ENCODE measurements at regions of chr11 and their contacts with region 1.

Region 1: DNA sequence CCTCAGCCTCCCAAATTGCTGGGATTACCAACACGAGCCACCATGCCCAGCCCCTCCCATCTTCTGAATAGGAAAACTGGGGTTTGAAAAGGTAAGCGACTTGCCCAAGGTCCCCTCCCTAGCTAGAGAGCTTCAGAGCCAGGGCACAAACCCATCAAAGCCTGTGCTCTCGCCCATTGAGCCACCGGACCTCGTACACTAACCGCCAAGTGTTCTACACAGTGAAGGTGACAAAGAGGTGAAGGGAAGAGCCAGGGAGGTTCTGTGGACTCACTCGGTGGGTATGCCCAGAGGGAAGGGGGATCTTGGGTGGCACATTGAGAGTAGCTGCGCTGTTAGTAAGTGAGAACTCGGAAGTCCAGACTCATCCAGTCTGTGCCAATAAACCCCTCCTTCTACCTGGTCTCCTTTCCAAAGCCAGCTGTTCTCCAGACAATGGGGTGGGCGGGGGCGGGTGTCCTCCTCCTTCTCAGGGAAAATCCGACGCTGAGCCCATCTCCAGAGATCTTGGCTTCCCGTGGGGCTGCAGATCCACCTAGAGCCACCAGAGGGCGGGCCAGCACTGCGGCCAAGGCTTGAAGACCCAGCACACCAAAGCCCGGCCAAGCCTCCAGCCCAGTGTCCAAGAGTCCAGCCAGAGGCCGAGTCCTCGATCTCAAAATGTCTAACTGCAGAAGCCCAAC is 3.2 kb upstream of the RTN4RL2 start:
- DNase-seq: peak; percentile 58 to 79 (median 63)
- H3K4me3 ChIP-seq: no peak overlapping the region
- H3K4me3 Mint-ChIP-seq: peak overlapping the region; percentile 72 to 88 (median 78)
- H3K27ac ChIP-seq: no peak overlapping the region
- H3K27ac Mint-ChIP-seq: peak overlapping the region in 7 of 8 donors; percentile 15 to 83 (median 48)
- H3K4me1 ChIP-seq: peaks cover 29% of the 10 kb centered on the region
- H3K4me1 Mint-ChIP-seq: peaks cover 25 to 37% (median 28%) of the 10 kb centered on the region in 3 donors
- H3K27me3 ChIP-seq: peaks cover 27% of the 10 kb centered on the region
- H3K27me3 Mint-ChIP-seq: peaks cover 23 to 35% of the 10 kb centered on the region in 2 donors

Region 2: GRCh38 chr11:57277845-57278709 is 179.0 kb before region 1 on chr11:
- CTCF ChIA-PET with region 1: no interaction called
- POLR2A ChIA-PET with region 1: no interaction called
- DNase-seq: no peak
- H3K4me3 ChIP-seq: no peak overlapping the region
- H3K4me3 Mint-ChIP-seq: no peak overlapping the region
- H3K27ac ChIP-seq: no peak overlapping the region
- H3K27ac Mint-ChIP-seq: peak overlapping the region in 2 of 8 donors; percentile 45 to 51
- H3K4me1 ChIP-seq: no peaks in the 10 kb centered on the region
- H3K4me1 Mint-ChIP-seq: peaks cover 4% of the 10 kb centered on the region in 3 donors
- H3K27me3 ChIP-seq: no peaks in the 10 kb centered on the region
- H3K27me3 Mint-ChIP-seq: peaks cover 11 to 36% of the 10 kb centered on the region in 2 donors

Region 3: DNA sequence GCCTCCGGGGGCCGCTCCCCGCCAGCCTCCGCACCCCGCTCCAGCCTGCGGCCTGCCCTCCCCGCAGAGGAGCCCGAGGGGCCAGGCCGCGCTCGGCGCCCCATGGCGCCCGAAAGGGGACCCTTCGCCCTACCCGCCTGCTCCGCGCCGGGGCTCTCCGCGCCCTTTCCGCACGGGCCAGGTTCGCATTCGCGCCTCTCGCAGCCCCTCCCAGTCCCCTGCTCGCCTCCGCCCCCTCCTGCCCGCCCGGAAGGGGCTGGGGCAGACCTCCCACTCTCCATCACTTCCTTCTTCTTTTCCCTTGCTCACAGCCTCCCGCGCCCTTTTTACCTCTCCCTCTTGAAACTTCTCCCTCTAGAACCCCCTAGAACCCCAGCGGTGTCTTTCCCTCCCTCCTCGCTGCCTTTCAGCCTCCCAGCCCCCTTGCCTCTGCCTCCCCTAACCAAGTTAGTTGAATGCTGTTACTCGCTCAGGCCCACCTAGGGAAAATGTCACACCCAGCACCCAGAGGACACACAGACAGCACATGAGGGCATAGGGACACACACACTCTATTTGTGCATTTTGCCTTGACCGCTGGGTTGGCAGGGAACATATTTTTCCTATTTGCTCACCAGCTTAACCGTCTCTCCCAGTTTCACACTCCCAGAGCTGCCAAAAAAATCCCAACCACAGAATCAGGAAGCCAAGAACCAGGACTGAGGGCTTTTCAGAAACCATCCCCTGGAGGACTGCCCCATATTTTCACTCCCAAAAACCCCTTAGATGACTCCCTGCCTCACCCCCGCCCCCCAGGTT is 30.0 kb before region 1 on chr11 and contains the start of gene SLC43A3:
- CTCF ChIA-PET with region 1: interaction called, 62 read pairs
- POLR2A ChIA-PET with region 1: interaction called, 9 read pairs
- DNase-seq: peak; percentile 46 to 74 (median 54)
- H3K4me3 ChIP-seq: peak within 1 kb of the TSS; percentile 43
- H3K4me3 Mint-ChIP-seq: peak within 1 kb of the TSS; percentile 88 to 94 (median 90)
- H3K27ac ChIP-seq: peak within 1 kb of the TSS; percentile 68
- H3K27ac Mint-ChIP-seq: peak within 1 kb of the TSS; percentile 92 to 97 (median 96)
- H3K4me1 ChIP-seq: peaks cover 35% of the 10 kb centered on the region
- H3K4me1 Mint-ChIP-seq: peaks cover 45 to 56% (median 54%) of the 10 kb centered on the region in 3 donors
- H3K27me3 ChIP-seq: no peaks in the 10 kb centered on the region
- H3K27me3 Mint-ChIP-seq: no peaks in the 10 kb centered on the region
- total RNA-seq, gene SLC43A3: 434 to 447 TPM

Region 4: GRCh38 chr11:57444362-57445121 is 12.6 kb before region 1 on chr11:
- CTCF ChIA-PET with region 1: interaction called, 47 read pairs
- POLR2A ChIA-PET with region 1: no interaction called
- DNase-seq: no peak
- H3K4me3 ChIP-seq: no peak overlapping the region
- H3K4me3 Mint-ChIP-seq: no peak overlapping the region
- H3K27ac ChIP-seq: no peak overlapping the region
- H3K27ac Mint-ChIP-seq: peak overlapping the region in 1 of 8 donors; percentile 34
- H3K4me1 ChIP-seq: no peaks in the 10 kb centered on the region
- H3K4me1 Mint-ChIP-seq: no peaks in the 10 kb centered on the region
- H3K27me3 ChIP-seq: no peaks in the 10 kb centered on the region
- H3K27me3 Mint-ChIP-seq: peaks cover 6 to 20% of the 10 kb centered on the region in 2 donors

Region 5: GRCh38 chr11:57480409-57481137 is 23.5 kb after region 1 on chr11:
- CTCF ChIA-PET with region 1: interaction called, 151 read pairs
- POLR2A ChIA-PET with region 1: interaction called, 3 read pairs
- DNase-seq: peak in 4 of 5 donors; percentile 34 to 71 (median 45)
- H3K4me3 ChIP-seq: no peak overlapping the region
- H3K4me3 Mint-ChIP-seq: peak overlapping the region in 2 of 7 donors; percentile 4 to 8
- H3K27ac ChIP-seq: no peak overlapping the region
- H3K27ac Mint-ChIP-seq: peak overlapping the region in 3 of 8 donors; percentile 2 to 50 (median 3)
- H3K4me1 ChIP-seq: peaks cover 7% of the 10 kb centered on the region
- H3K4me1 Mint-ChIP-seq: peaks cover 10 to 37% (median 16%) of the 10 kb centered on the region in 3 donors
- H3K27me3 ChIP-seq: no peaks in the 10 kb centered on the region
- H3K27me3 Mint-ChIP-seq: peaks cover 11 to 13% of the 10 kb centered on the region in 2 donors

Region 6: DNA sequence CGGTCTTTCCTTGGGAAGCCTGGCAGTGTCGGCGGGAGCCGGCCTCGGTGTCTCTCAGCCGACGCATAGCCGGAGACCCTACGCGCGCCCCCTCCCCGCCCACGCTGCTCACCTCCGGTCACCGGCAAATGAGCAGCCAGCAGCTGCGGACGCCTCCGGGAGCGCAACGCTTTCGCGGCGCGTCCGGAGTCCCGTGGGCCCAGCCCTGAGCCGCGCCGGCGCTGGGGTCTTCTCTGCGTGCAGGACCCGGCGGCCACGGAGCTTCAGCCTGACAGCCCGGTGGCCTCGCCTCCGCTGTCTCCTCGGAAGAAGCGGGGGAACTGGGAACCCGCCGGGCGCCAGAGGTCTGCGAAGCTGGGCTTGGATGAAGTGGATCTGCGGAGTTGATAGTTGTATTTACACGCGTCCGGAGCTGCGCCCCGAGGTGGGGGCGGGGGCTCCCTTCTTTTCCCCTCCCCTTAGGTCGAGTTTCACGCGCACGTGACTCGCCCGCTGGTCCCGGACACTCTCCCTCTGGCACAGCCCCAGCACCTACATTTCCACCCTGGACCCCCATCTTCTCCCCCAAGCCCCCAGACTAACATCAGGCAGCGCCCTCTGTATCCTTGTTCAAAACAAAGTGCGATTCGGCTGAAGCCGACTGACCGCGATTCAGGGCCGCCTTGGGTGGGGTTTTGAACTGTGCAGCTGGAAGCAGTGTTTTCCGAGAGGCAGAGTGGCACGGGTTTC is 58.4 kb after region 1 on chr11 and contains the start of gene SLC43A1:
- CTCF ChIA-PET with region 1: interaction called, 54 read pairs
- POLR2A ChIA-PET with region 1: interaction called, 4 read pairs
- DNase-seq: peak in 1 of 5 donors; percentile 21
- H3K4me3 ChIP-seq: peak within 1 kb of the TSS; percentile 86
- H3K4me3 Mint-ChIP-seq: peak within 1 kb of the TSS; percentile 97 to 99 (median 98)
- H3K27ac ChIP-seq: peak within 1 kb of the TSS; percentile 61
- H3K27ac Mint-ChIP-seq: peak within 1 kb of the TSS; percentile 79 to 95 (median 90)
- H3K4me1 ChIP-seq: peaks cover 18% of the 10 kb centered on the region
- H3K4me1 Mint-ChIP-seq: peaks cover 24 to 36% (median 32%) of the 10 kb centered on the region in 3 donors
- H3K27me3 ChIP-seq: no peaks in the 10 kb centered on the region
- H3K27me3 Mint-ChIP-seq: peaks cover 0 to 3% of the 10 kb centered on the region in 2 donors
- total RNA-seq, gene SLC43A1: 24.2 to 25.3 TPM

Region 7: GRCh38 chr11:57644748-57645688 is 187.9 kb after region 1 on chr11:
- CTCF ChIA-PET with region 1: interaction called, 27 read pairs
- POLR2A ChIA-PET with region 1: no interaction called
- DNase-seq: peak; percentile 74 to 89 (median 78)
- H3K4me3 ChIP-seq: no peak overlapping the region
- H3K4me3 Mint-ChIP-seq: peak overlapping the region in 1 of 7 donors; percentile 53
- H3K27ac ChIP-seq: no peak overlapping the region
- H3K27ac Mint-ChIP-seq: peak overlapping the region in 3 of 8 donors; percentile 31 to 61 (median 54)
- H3K4me1 ChIP-seq: peaks cover 12% of the 10 kb centered on the region
- H3K4me1 Mint-ChIP-seq: peaks cover 20 to 42% (median 25%) of the 10 kb centered on the region in 3 donors
- H3K27me3 ChIP-seq: peaks cover 34% of the 10 kb centered on the region
- H3K27me3 Mint-ChIP-seq: peaks cover 38 to 54% of the 10 kb centered on the region in 2 donors

Measured in CD8-positive, alpha-beta memory T cell (primary cell).